PC-3 (cell line): ENCODE measurements at regions of chr5 and their contacts with region 1.

Region 1: DNA sequence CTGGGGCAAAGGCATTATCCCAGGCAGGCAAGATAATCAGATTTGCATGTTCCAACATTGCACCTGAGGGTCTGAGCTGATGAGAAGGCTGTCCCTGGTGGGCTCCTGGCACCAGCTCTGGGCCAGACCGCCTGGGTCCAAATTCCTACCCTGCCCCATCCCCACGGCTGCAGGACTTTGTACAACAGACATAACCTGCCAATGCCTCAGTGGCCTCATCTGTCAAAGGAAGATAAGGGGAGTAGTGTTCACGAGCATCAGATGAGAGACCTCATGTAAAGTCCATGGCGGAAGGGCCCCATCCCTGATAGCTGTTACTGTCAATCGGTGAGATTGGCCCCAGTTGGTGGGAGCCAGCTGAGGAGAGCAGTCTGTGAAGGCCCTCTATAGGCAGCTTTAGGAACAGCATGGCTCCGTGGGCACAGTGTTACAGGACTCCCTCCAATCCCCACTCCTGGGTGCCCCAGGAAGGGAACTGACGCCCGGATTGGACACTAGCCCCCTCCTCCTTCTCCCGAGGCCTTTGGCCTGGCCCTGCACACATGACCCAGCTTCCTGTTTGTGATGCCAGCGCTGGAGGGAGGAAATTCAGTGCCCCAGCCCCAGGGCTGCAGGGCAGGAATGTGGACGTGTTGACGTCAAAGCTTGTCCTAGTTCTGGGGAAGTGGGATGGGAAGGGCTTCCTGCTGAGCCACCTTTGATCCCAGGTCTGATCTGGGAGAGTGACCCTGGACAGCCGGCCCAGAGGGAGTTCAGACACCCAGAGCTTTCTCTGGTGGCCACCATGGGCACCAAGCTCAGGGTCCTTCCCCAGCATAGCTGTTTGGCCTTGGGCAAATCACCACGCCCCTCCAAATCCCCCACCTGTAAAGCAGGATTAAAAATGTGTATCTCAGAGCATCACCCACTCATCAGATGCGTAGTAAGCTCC is 56.2 kb downstream of the DUSP1 start:
- DNase-seq: peak; percentile 78
- ATAC-seq: peak; percentile 70
- H3K4me3 ChIP-seq: no peak overlapping the region
- H3K27ac ChIP-seq: peak overlapping the region; percentile 67
- H3K4me1 ChIP-seq: peaks cover 13% of the 10 kb centered on the region
- H3K27me3 ChIP-seq: no peaks in the 10 kb centered on the region
- CTCF ChIP-seq: peak; percentile 84

Region 2: GRCh38 chr5:172274921-172275753 is 439.6 kb before region 1 on chr5:
- CTCF ChIA-PET with region 1: no interaction called
- POLR2A ChIA-PET with region 1: no interaction called
- intact Hi-C with region 1: no loop called
- DNase-seq: no peak
- ATAC-seq: no peak
- H3K4me3 ChIP-seq: no peak overlapping the region
- H3K27ac ChIP-seq: no peak overlapping the region
- H3K4me1 ChIP-seq: peaks cover 23% of the 10 kb centered on the region
- H3K27me3 ChIP-seq: no peaks in the 10 kb centered on the region
- CTCF ChIP-seq: no peak

Region 3: DNA sequence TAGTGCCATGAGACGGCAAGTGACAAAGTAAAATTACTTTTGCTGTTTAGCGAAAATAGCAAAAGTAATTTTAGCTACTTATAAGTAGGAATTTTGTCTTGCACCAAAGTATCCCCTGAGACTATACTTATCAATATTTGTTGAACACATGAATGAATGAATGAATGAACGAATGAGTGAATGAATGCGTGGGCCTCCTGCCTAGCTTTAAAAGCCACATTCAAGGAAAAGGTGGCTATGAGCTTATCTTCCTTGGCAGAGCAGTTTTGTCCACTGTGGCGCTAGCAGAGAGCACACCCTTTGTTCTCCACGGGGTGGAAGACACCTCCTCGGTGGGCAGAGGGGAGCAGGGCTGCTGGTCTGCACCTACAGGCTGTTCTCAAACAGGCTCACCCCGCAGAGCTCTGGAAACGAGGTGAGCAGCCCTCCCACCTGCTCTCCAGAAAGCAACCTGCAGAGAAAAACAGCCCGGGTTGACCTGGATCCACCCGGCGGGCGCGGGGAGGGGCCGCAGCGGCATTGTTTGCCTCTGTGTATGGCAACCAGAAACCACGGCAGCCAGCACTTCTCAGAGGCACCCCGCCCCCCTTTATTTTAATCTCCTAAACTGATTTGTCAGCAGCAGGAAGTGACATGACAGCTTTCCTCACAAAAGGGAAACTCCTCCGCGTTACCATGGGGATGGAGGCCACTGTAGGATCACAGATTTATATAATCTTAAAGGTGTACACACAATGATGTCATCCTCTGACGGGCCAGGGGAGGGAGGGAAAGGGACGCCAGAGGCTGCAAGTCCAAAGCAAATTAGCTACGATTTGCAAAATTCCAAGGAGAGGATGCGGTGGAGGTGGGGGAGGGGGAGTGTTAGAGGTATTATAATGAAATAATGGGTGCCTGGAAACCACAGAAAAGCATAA is 50.4 kb after region 1 on chr5:
- CTCF ChIA-PET with region 1: interaction called, 3 read pairs
- POLR2A ChIA-PET with region 1: no interaction called
- intact Hi-C with region 1: loop called (anchors 2 kb)
- DNase-seq: peak; percentile 99
- ATAC-seq: peak; percentile 82
- H3K4me3 ChIP-seq: peak overlapping the region; percentile 63
- H3K27ac ChIP-seq: peak overlapping the region; percentile 77
- H3K4me1 ChIP-seq: peaks cover 40% of the 10 kb centered on the region
- H3K27me3 ChIP-seq: no peaks in the 10 kb centered on the region
- CTCF ChIP-seq: no peak

Region 4: DNA sequence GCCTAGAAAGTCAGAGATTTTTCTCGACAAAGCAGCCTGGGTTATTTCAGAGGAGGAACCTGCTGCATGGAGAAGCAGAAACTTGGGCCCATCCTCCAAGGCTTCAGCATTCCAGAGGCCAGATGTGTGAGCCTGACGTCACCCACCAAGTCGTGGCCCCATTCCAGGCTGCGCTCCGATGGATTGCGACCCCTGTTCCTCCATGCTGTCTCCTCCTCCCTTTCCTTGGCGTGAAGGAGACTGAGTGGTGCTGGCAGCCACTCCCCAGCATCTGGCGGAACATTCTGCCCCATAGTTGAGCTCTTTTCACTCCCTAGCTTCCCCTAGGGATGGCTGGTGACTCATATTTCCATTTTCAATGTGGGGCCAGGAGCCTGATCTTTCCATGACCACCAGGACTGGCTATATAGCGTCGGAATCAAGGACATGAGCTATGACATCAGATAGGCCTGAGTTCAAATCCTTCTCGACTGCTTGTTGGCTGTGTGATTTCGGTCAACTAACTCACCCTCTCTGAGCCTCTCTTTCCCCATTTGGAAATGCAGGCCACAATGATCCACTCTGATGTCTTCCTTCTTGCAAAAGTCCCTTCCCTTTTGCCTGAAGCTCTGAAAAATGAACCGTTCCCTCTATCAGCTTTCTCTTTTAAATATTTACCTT is 80.7 kb after region 1 on chr5:
- CTCF ChIA-PET with region 1: no interaction called
- POLR2A ChIA-PET with region 1: no interaction called
- intact Hi-C with region 1: no loop called
- DNase-seq: no peak
- ATAC-seq: no peak
- H3K4me3 ChIP-seq: no peak overlapping the region
- H3K27ac ChIP-seq: peak overlapping the region; percentile 3; the same call in 1 of the 2 replicates
- H3K4me1 ChIP-seq: peaks cover 44% of the 10 kb centered on the region
- H3K27me3 ChIP-seq: no peaks in the 10 kb centered on the region
- CTCF ChIP-seq: no peak

Region 5: GRCh38 chr5:172834415-172835289 is 119.9 kb after region 1 on chr5:
- CTCF ChIA-PET with region 1: interaction called, 11 read pairs
- POLR2A ChIA-PET with region 1: no interaction called
- intact Hi-C with region 1: no loop called
- DNase-seq: no peak
- ATAC-seq: peak; percentile 16
- H3K4me3 ChIP-seq: peak overlapping the region; percentile 92
- H3K27ac ChIP-seq: peak overlapping the region; percentile 61
- H3K4me1 ChIP-seq: peaks cover 23% of the 10 kb centered on the region
- H3K27me3 ChIP-seq: no peaks in the 10 kb centered on the region
- CTCF ChIP-seq: no peak

Region 6: DNA sequence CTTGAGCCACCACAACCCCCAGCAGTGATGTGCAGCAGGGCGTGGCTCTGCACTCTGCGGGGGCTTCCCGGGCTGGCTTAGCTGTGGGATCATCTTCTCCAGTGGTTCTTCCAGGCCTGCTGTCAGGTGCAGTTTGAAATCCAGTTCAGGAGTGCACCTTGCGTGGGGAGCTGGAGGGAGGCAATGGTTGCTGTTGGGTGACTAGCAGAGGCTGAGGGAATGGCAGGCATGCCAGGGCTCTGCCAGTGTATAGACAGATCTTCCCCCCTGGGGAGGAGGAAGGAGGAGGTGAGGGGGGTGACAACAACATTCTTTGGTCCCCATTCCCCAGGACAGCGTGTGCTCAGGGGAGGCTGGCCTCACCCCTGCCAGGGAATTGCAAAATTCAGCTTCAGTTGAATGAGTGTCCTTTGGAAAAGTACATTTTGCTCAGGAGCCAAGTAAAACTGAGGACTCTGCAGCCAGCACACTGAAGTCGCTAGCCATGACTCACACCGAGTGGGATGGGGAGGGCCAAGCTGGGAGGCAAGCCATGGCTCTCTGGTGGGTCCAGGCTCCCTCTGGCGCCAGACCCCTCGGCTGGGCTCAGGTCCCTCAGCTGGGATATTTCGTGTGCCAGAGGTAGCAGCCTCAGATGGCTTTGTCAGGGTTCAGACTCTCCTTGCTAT is 154.3 kb after region 1 on chr5:
- CTCF ChIA-PET with region 1: interaction called, 4 read pairs
- POLR2A ChIA-PET with region 1: no interaction called
- intact Hi-C with region 1: loop called (anchors 1 kb)
- DNase-seq: peak; percentile 88
- ATAC-seq: peak; percentile 70
- H3K4me3 ChIP-seq: peak overlapping the region; percentile 55
- H3K27ac ChIP-seq: peak overlapping the region; percentile 99
- H3K4me1 ChIP-seq: peaks cover 48% of the 10 kb centered on the region
- H3K27me3 ChIP-seq: no peaks in the 10 kb centered on the region
- CTCF ChIP-seq: peak; percentile 55

Region 7: GRCh38 chr5:172902497-172903200 is 187.9 kb after region 1 on chr5:
- CTCF ChIA-PET with region 1: no interaction called
- POLR2A ChIA-PET with region 1: no interaction called
- intact Hi-C with region 1: loop called (anchors 1 kb)
- DNase-seq: peak; percentile 73
- ATAC-seq: peak; percentile 45
- H3K4me3 ChIP-seq: no peak overlapping the region
- H3K27ac ChIP-seq: peak overlapping the region; percentile 96
- H3K4me1 ChIP-seq: peaks cover 48% of the 10 kb centered on the region
- H3K27me3 ChIP-seq: no peaks in the 10 kb centered on the region
- CTCF ChIP-seq: peak; percentile 62

Region 8: GRCh38 chr5:172932313-172933017 is 217.7 kb after region 1 on chr5:
- CTCF ChIA-PET with region 1: interaction called, 9 read pairs
- POLR2A ChIA-PET with region 1: no interaction called
- intact Hi-C with region 1: loop called (anchors 1 kb)
- DNase-seq: peak; percentile 70
- ATAC-seq: peak; percentile 66
- H3K4me3 ChIP-seq: no peak overlapping the region
- H3K27ac ChIP-seq: peak overlapping the region; percentile 88
- H3K4me1 ChIP-seq: peaks cover 21% of the 10 kb centered on the region
- H3K27me3 ChIP-seq: no peaks in the 10 kb centered on the region
- CTCF ChIP-seq: peak; percentile 95